Activated naive CD4-positive, alpha-beta T cell treated with anti-CD3 and anti-CD28 coated beads, Interleukin-2, amount 10 ng/mL, durations not matched to agents 7 days and 5 days (primary cell): ENCODE measurements at regions of chr17 and their contacts with region 1.

Region 1: GRCh38 chr17:81967533-81968395 is 6.8 kb upstream of the NOTUM start:
- DNase-seq: peak; percentile 95
- H3K4me3 Mint-ChIP-seq: peak overlapping the region; percentile 43
- H3K27ac Mint-ChIP-seq: peak overlapping the region; percentile 85
- H3K4me1 Mint-ChIP-seq: peaks cover 20% of the 10 kb centered on the region
- H3K27me3 Mint-ChIP-seq: peaks cover 50% of the 10 kb centered on the region

Region 2: GRCh38 chr17:82022981-82023374 is 55.2 kb after region 1 on chr17 and contains the start of gene LRRC45:
- CTCF ChIA-PET with region 1: interaction called, 103 read pairs
- DNase-seq: peak; percentile 100
- H3K4me3 Mint-ChIP-seq: peak within 1 kb of the TSS; percentile 83
- H3K27ac Mint-ChIP-seq: peak within 1 kb of the TSS; percentile 81
- H3K4me1 Mint-ChIP-seq: peaks cover 49% of the 10 kb centered on the region
- H3K27me3 Mint-ChIP-seq: no peaks in the 10 kb centered on the region

Region 3: DNA sequence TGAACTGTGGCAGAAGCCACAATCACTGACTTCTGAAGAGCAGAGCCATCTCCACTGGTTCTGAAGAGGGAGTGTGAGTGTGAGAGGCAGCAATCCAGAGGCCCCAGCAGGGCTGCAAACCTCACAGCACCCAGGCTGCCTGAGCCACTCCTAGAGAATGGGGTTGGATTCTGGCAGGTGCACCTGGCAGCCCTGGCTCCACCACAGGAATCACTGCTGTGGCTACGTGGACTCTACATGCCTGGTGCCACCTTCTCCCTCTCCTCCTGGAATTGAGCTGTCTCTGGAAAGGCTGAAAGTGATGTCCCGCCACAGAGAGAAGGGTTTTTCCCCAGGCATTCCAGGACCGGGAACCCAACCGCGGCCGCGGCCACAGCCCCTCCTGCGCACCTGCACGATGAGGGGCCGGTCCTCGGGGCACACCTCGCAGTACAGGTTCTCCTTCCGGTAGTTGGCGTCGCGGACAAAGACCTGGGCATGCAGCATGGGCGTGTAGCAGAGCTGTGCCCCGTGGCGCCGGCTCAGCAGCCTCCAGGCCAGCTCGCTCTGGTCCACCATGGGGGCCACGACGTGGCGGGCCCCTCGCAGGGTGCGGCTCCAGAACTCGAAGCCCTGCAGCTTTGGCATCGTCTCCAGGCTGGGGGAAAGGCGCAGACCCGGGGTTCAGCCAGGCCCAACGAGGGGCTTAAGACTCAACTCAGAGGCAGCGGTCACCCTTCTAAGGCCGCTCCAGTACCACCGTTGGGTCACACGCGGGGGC is 96.8 kb after region 1 on chr17:
- CTCF ChIA-PET with region 1: no interaction called
- DNase-seq: no peak
- H3K4me3 Mint-ChIP-seq: peak overlapping the region; percentile 66
- H3K27ac Mint-ChIP-seq: peak overlapping the region; percentile 68
- H3K4me1 Mint-ChIP-seq: peaks cover 20% of the 10 kb centered on the region
- H3K27me3 Mint-ChIP-seq: no peaks in the 10 kb centered on the region